CD8-positive, alpha-beta T cell (primary cell): ENCODE measurements at regions of chr13 and their contacts with region 1.

Region 1: DNA sequence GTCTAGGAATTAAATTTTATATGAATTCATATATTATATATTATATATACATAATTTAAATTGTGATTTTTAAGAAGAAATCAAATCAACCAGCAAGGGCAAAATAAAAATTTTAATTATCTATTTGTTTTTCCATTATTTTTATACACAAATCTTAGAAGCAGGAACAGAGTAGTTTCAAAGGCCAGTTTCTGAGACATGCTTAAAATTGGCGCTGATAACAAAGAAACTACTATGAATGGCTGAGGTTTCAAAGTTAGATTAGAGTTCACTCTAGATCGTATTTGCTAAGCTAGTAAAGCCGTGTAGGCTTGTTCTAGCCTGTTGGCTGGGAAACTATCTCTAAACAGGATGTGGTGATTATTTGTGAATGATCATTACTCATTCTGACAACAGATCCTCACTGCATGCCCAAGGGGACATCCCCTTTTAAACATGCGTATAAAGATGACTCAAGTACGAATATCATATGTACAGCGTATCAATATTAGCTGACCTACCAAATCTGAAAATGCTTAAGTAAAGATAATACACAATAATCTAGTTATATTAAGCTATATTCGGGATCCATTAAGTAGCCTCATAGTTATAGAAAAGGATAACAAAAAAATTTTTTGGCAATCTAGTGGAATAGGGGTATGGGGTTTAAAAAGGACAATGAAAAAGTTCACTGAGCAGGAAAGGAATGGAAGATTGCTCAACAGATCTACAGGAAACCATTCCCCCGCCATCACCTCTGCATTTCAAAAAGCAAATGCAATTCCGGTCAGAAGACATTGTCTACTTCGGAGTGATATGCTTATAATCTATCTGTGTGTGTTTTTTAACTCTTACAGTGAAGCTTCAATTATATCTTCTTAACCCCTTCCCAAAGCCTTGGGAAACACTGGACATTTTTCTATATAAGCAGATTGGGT is 150.1 kb downstream of the SHISA2 start:
- DNase-seq: peak in 5 of 9 experiments; percentile 6 to 89 (median 49)
- ATAC-seq: peak; percentile 88
- H3K4me3 ChIP-seq: no peak overlapping the region
- H3K4me3 Mint-ChIP-seq: no peak overlapping the region
- H3K27ac ChIP-seq: no peak overlapping the region
- H3K27ac Mint-ChIP-seq: peak overlapping the region; percentile 50
- H3K4me1 ChIP-seq: peaks cover 65% of the 10 kb centered on the region
- H3K4me1 Mint-ChIP-seq: peaks cover 39% of the 10 kb centered on the region
- H3K27me3 ChIP-seq: no peaks in the 10 kb centered on the region
- H3K27me3 Mint-ChIP-seq: no peaks in the 10 kb centered on the region
- CTCF ChIP-seq: no peak

Region 2: DNA sequence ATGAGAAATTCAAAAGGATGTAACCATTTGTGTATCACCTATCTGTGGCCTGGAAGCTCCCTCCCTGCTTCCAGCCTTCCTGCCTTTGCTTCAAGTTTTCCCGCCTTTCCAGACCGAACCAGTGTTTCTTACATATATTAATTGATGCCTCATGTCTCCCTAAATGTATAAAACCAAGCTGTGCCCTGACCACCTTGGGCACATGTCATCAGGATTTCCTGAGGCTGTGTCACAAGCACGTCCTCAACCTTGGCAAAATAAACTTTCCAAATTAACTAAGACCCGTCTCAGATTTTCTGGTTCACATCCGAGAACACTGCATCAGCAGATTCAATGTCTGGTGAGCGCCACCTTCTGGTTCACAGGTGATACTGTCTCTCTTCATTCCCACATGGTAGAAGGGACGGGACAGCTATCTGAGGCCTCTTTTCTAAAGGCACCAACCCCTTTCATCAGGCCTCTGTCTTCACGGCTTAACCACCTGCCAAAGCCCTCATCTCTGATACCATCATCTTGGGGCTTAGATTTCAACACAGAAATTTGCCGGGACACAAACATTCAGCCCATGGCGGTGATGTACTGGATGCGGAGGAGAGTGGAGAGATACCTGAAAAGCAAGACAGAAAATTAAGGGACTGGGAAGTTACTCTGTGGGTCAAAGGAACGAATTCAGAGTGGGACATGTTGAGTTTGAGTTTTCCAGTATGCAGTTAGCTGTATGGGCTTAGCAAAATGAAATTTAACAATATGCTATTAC is 864.5 kb before region 1 on chr13:
- CTCF ChIA-PET with region 1: no interaction called
- POLR2A ChIA-PET with region 1: no interaction called
- intact Hi-C with region 1: no loop called
- DNase-seq: peak in 8 of 9 experiments; percentile 11 to 66 (median 36)
- ATAC-seq: peak; percentile 36
- H3K4me3 ChIP-seq: no peak overlapping the region
- H3K4me3 Mint-ChIP-seq: no peak overlapping the region
- H3K27ac ChIP-seq: no peak overlapping the region
- H3K27ac Mint-ChIP-seq: no peak overlapping the region
- H3K4me1 ChIP-seq: no peaks in the 10 kb centered on the region
- H3K4me1 Mint-ChIP-seq: no peaks in the 10 kb centered on the region
- H3K27me3 ChIP-seq: peaks cover 0 to 2% of the 10 kb centered on the region in 2 experiments
- H3K27me3 Mint-ChIP-seq: peaks cover 37% of the 10 kb centered on the region
- CTCF ChIP-seq: peak; percentile 61

Region 3: DNA sequence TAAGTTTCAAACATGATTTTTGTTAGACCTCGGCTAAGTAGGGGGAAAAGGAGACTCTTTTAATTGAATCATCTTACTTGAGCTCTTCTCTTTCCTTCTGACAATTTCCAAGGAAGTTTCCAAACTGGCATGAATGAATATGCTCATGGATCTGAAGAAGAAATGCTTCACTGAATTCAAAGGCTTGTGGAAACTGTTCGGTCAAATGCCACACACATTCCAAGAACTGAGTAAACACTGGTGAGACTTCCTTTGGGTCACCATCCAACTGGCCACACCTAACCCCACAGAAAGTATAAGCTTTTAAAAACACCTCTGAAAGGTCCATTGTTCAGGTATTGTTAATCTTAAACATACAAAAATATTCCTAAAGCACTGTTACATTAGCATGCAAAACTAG is 648.0 kb before region 1 on chr13:
- CTCF ChIA-PET with region 1: no interaction called
- POLR2A ChIA-PET with region 1: no interaction called
- intact Hi-C with region 1: no loop called
- DNase-seq: no peak
- ATAC-seq: no peak
- H3K4me3 ChIP-seq: no peak overlapping the region
- H3K4me3 Mint-ChIP-seq: no peak overlapping the region
- H3K27ac ChIP-seq: no peak overlapping the region
- H3K27ac Mint-ChIP-seq: no peak overlapping the region
- H3K4me1 ChIP-seq: no peaks in the 10 kb centered on the region
- H3K4me1 Mint-ChIP-seq: no peaks in the 10 kb centered on the region
- H3K27me3 ChIP-seq: no peaks in the 10 kb centered on the region
- H3K27me3 Mint-ChIP-seq: no peaks in the 10 kb centered on the region
- CTCF ChIP-seq: no peak

Region 4: DNA sequence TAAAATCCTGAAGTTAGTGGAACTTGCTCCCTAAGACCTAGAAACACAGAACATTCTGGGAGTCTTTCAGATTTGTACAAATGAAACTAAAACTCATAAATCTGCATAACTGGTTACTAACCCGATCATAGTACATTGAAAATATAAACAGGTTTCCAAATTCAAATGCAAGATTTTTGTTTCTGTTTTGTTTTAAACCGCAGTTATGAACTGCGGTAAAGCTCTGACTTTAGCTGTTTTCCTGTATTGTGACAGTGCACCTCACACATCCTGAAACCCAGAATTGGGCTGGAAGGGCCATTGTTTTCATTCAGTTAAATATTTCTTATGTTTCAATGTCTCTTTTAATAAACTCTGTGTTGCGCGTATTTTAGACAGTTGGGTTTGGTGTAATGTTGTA is 54.6 kb before region 1 on chr13:
- CTCF ChIA-PET with region 1: no interaction called
- POLR2A ChIA-PET with region 1: no interaction called
- intact Hi-C with region 1: loop called (anchors 5 to 10 kb)
- DNase-seq: peak in 2 of 9 experiments; percentile 41 to 70
- ATAC-seq: peak; percentile 84
- H3K4me3 ChIP-seq: peak overlapping the region in 1 of 2 experiments; percentile 5
- H3K4me3 Mint-ChIP-seq: peak overlapping the region; percentile 68
- H3K27ac ChIP-seq: peak overlapping the region in 1 of 2 experiments; percentile 44
- H3K27ac Mint-ChIP-seq: peak overlapping the region; percentile 85
- H3K4me1 ChIP-seq: peaks cover 16% of the 10 kb centered on the region
- H3K4me1 Mint-ChIP-seq: peaks cover 34% of the 10 kb centered on the region
- H3K27me3 ChIP-seq: no peaks in the 10 kb centered on the region
- H3K27me3 Mint-ChIP-seq: peaks cover 2% of the 10 kb centered on the region
- CTCF ChIP-seq: no peak

Region 5: GRCh38 chr13:25874907-25875306 is 26.8 kb before region 1 on chr13:
- CTCF ChIA-PET with region 1: no interaction called
- POLR2A ChIA-PET with region 1: no interaction called
- intact Hi-C with region 1: loop called in 1 of 2 experiments (anchors 5 kb)
- DNase-seq: peak; percentile 35 to 82 (median 66)
- ATAC-seq: peak; percentile 91
- H3K4me3 ChIP-seq: peak overlapping the region in 1 of 2 experiments; percentile 3
- H3K4me3 Mint-ChIP-seq: peak overlapping the region; percentile 30
- H3K27ac ChIP-seq: peak overlapping the region; percentile 15 to 60
- H3K27ac Mint-ChIP-seq: peak overlapping the region; percentile 83
- H3K4me1 ChIP-seq: peaks cover 53% of the 10 kb centered on the region
- H3K4me1 Mint-ChIP-seq: peaks cover 81% of the 10 kb centered on the region
- H3K27me3 ChIP-seq: no peaks in the 10 kb centered on the region
- H3K27me3 Mint-ChIP-seq: no peaks in the 10 kb centered on the region
- CTCF ChIP-seq: no peak

Region 6: DNA sequence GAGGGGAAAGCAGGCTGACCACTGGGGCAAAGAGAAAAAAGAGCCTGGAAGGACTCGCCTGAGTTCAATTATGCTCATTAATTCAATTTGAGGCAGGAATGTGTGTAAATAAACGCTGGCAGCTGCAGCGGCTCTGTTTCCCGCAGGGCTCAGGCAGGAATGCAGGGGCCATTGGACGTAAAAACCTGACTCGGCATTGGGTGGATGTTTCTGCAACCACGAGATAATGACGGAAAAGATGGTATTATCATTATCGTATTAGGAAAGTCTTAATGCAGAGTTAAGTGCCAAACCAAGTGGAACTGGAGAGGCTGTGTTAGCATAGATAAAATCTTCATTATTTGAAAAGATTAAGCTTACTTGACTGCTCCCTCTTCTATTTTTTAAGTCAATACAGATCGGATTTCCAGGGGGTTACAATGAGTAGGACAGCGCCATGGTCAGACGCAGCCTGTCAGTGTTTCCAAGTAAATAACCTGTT is 19.7 kb before region 1 on chr13:
- CTCF ChIA-PET with region 1: no interaction called
- POLR2A ChIA-PET with region 1: no interaction called
- intact Hi-C with region 1: loop called in 1 of 2 experiments (anchors 2 kb)
- DNase-seq: no peak
- ATAC-seq: no peak
- H3K4me3 ChIP-seq: no peak overlapping the region
- H3K4me3 Mint-ChIP-seq: no peak overlapping the region
- H3K27ac ChIP-seq: no peak overlapping the region
- H3K27ac Mint-ChIP-seq: no peak overlapping the region
- H3K4me1 ChIP-seq: peaks cover 52% of the 10 kb centered on the region
- H3K4me1 Mint-ChIP-seq: peaks cover 74% of the 10 kb centered on the region
- H3K27me3 ChIP-seq: no peaks in the 10 kb centered on the region
- H3K27me3 Mint-ChIP-seq: no peaks in the 10 kb centered on the region
- CTCF ChIP-seq: no peak

Region 7: GRCh38 chr13:25971459-25972145 is 69.9 kb after region 1 on chr13:
- CTCF ChIA-PET with region 1: no interaction called
- POLR2A ChIA-PET with region 1: no interaction called
- intact Hi-C with region 1: loop called in 1 of 2 experiments (anchors 5 kb)
- DNase-seq: peak in 7 of 9 experiments; percentile 6 to 79 (median 67)
- ATAC-seq: peak; percentile 88
- H3K4me3 ChIP-seq: no peak overlapping the region
- H3K4me3 Mint-ChIP-seq: peak overlapping the region; percentile 32
- H3K27ac ChIP-seq: peak overlapping the region; percentile 14 to 40
- H3K27ac Mint-ChIP-seq: peak overlapping the region; percentile 88
- H3K4me1 ChIP-seq: peaks cover 48% of the 10 kb centered on the region
- H3K4me1 Mint-ChIP-seq: peaks cover 54% of the 10 kb centered on the region
- H3K27me3 ChIP-seq: no peaks in the 10 kb centered on the region
- H3K27me3 Mint-ChIP-seq: no peaks in the 10 kb centered on the region
- CTCF ChIP-seq: no peak

Region 8: GRCh38 chr13:26011996-26012821 is 110.5 kb after region 1 on chr13:
- CTCF ChIA-PET with region 1: no interaction called
- POLR2A ChIA-PET with region 1: interaction called, 4 read pairs
- intact Hi-C with region 1: loop called in 1 of 2 experiments (anchors 5 kb)
- DNase-seq: peak; percentile 43 to 91 (median 77)
- ATAC-seq: peak; percentile 96
- H3K4me3 ChIP-seq: peak overlapping the region; percentile 62 to 64
- H3K4me3 Mint-ChIP-seq: peak overlapping the region; percentile 84
- H3K27ac ChIP-seq: peak overlapping the region; percentile 83 to 86
- H3K27ac Mint-ChIP-seq: peak overlapping the region; percentile 97
- H3K4me1 ChIP-seq: peaks cover 21% of the 10 kb centered on the region
- H3K4me1 Mint-ChIP-seq: peaks cover 51% of the 10 kb centered on the region
- H3K27me3 ChIP-seq: no peaks in the 10 kb centered on the region
- H3K27me3 Mint-ChIP-seq: no peaks in the 10 kb centered on the region
- CTCF ChIP-seq: no peak

Region 9: GRCh38 chr13:26051657-26052311 is 150.1 kb after region 1 on chr13 and contains the start of gene SHISA2:
- CTCF ChIA-PET with region 1: no interaction called
- POLR2A ChIA-PET with region 1: no interaction called
- intact Hi-C with region 1: loop called in 1 of 2 experiments (anchors 10 kb)
- DNase-seq: peak in 4 of 9 experiments; percentile 61 to 74 (median 70)
- ATAC-seq: peak; percentile 69
- H3K4me3 ChIP-seq: peak within 1 kb of the TSS; percentile 42
- H3K4me3 Mint-ChIP-seq: peak within 1 kb of the TSS; percentile 81
- H3K27ac ChIP-seq: no peak within 1 kb of the TSS
- H3K27ac Mint-ChIP-seq: peak within 1 kb of the TSS; percentile 45
- H3K4me1 ChIP-seq: peaks cover 28% of the 10 kb centered on the region
- H3K4me1 Mint-ChIP-seq: peaks cover 15% of the 10 kb centered on the region
- H3K27me3 ChIP-seq: peaks cover 7 to 9% of the 10 kb centered on the region in 2 experiments
- H3K27me3 Mint-ChIP-seq: peaks cover 20% of the 10 kb centered on the region
- CTCF ChIP-seq: no peak
- total RNA-seq, gene SHISA2: 6.4 to 6.8 TPM